ENCODE measurements at regions of chr5 and their contacts with region 1.

Region 1: DNA sequence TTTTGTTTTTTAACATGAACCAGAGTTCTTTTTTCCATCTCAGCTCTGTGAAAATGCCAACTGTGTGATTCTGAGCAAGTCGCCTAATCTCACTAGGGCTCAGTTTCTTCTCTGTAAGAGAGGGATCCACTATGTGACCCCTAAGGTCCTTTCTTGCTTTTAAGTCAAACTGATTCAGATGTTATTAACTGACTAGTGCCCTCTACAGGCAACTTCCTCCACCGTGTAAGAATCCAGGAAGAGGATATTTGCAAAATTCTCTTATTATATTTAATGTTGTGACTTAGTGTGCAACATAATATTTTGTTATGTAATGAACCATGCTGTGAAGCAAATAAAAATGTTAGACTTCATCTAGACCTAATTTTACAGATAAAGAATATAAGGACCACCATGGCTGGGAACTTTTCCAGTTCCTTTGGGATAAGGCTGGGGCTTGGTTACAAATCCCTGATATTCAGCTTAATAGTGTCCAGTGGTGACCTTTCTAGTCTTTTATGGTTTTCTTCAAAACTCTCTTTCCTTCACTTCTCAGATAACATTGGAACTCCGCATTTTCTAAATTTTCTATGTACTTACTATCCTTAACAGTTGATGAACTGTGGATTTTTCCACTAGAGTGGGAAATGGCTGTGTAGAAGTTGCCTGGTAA is 244.7 kb downstream of the PIK3R1 start:
- DNase-seq: peak; percentile 67
- H3K4me3 Mint-ChIP-seq: no peak overlapping the region
- H3K27ac Mint-ChIP-seq: no peak overlapping the region
- H3K4me1 Mint-ChIP-seq: peaks cover 10% of the 10 kb centered on the region
- H3K27me3 Mint-ChIP-seq: no peaks in the 10 kb centered on the region
- CTCF ChIP-seq: peak; percentile 69

Region 2: GRCh38 chr5:68593191-68593675 is 133.0 kb after region 1 on chr5:
- CTCF ChIA-PET with region 1: no interaction called
- POLR2A ChIA-PET with region 1: no interaction called
- intact Hi-C with region 1: no loop called
- DNase-seq: no peak
- H3K4me3 Mint-ChIP-seq: no peak overlapping the region
- H3K27ac Mint-ChIP-seq: no peak overlapping the region
- H3K4me1 Mint-ChIP-seq: no peaks in the 10 kb centered on the region
- H3K27me3 Mint-ChIP-seq: no peaks in the 10 kb centered on the region
- CTCF ChIP-seq: no peak

Region 3: GRCh38 chr5:68745448-68745847 is 285.2 kb after region 1 on chr5:
- CTCF ChIA-PET with region 1: no interaction called
- POLR2A ChIA-PET with region 1: no interaction called
- intact Hi-C with region 1: loop called (anchors 10 kb)
- DNase-seq: peak; percentile 34
- H3K4me3 Mint-ChIP-seq: no peak overlapping the region
- H3K27ac Mint-ChIP-seq: no peak overlapping the region
- H3K4me1 Mint-ChIP-seq: peaks cover 6% of the 10 kb centered on the region
- H3K27me3 Mint-ChIP-seq: peaks cover 22% of the 10 kb centered on the region
- CTCF ChIP-seq: peak; percentile 13

Region 4: DNA sequence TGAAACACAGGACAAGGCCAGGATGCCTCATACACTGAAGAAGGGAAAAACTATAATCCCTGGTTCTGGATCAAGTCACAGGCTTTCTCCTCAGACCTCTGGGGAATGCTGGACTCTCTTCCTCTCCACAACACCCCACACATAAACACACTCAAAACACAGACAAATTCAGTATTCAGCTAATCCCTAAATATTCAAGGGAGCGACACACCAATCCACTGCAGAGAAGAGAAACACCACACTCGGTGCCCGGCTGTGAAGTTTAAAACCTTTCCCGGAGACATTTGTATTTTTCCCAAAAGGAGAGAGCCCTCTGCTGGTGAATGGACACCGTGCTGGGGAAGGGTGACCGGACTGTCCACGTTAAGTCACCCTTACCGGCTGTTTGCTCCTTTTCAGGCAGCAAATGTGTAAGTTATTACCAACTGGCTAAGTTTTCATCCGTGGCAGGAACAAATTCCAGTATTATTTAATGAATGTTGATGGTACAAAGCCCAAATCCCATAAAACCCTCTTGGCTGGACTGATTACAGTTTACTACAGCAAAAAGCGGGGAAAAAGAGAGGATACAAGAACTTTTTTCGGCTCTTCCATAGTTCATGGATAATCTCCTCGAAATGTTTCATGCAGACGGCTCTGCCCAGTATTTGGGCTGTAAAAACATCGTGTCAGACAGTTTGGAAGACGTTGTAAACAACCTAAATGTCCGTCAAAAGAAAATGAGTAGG is 502.6 kb after region 1 on chr5:
- CTCF ChIA-PET with region 1: no interaction called
- POLR2A ChIA-PET with region 1: no interaction called
- intact Hi-C with region 1: loop called (anchors 2 kb)
- DNase-seq: peak; percentile 73
- H3K4me3 Mint-ChIP-seq: no peak overlapping the region
- H3K27ac Mint-ChIP-seq: no peak overlapping the region
- H3K4me1 Mint-ChIP-seq: peaks cover 6% of the 10 kb centered on the region
- H3K27me3 Mint-ChIP-seq: no peaks in the 10 kb centered on the region
- CTCF ChIP-seq: peak; percentile 73

Region 5: DNA sequence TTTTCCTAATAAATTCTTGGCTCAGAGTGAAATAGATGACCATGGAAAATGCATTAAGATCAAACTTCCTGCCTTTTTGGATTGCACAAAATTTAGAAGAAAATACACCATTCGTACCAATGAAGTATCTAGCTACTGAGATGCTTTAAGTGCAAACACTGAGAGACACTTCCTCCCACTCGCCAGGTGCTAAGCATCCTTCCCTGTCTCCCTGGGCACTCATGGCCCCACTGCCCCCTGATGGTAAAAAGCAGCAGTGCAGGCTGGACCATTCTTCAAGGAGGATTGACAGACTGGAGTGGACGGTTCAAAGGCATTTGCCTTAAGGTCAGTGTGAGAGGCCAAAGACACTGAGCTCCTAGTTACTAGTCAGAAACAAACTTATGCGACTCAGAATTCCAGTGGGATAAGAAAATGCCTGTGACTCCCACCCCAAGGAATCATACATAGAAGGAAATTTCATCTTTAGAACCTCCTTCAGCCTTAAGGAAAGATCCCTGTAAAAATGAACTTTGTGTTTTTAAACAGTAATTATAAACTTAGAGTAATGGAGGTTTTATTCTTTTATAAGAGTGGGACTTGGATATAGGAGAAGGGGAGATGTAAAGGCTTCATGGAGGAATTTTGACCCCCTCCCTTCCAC is 547.6 kb after region 1 on chr5:
- CTCF ChIA-PET with region 1: no interaction called
- POLR2A ChIA-PET with region 1: no interaction called
- intact Hi-C with region 1: loop called (anchors 5 kb)
- DNase-seq: peak; percentile 75
- H3K4me3 Mint-ChIP-seq: no peak overlapping the region
- H3K27ac Mint-ChIP-seq: no peak overlapping the region
- H3K4me1 Mint-ChIP-seq: no peaks in the 10 kb centered on the region
- H3K27me3 Mint-ChIP-seq: peaks cover 30% of the 10 kb centered on the region
- CTCF ChIP-seq: peak; percentile 80